ENCODE measurements at regions of chr11 and their contacts with region 1.

Region 1: DNA sequence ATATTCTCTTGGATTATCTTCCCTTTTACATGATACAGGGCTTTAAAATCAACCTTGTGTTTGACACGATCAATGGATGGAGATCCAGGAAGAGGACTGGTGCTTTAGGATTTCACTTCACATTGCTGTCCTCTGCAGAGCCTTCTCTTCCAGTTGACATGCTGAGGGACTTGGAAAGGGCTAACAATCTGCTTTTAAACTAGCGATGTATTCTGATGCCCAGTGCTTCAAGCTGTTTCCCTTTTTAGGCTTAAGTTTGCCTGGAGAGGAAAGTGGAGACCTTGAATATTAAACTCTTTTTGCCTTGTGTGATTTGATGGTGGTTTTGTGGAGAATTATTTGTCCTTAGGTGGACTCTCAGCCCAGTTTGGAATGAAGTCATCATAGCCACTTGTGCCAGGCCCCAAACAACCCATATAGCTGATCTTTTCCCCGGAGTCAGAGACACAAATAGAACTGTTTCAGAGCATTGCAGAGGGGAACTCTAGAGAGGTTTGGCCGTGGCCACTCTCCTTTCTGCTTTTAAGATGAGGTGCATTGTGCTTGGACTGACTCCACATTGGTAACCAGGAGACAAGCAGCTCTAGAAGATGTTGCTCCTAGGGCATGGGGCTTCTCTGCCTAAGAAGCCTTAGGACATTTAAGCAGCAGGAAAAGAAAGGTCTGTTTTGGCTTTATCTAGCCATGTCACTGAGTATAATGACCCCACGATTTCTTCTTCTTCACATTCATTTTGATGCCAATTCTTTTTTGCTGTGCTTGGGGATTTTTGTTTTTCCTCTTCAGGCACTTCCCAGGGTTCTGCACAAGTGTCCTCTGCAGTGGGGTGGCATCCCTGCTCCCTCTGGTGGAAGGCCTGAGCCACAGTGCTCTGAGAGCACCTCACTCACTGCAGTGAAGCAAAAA is 152.8 kb downstream of the NCAM1 start:
- DNase-seq: peak; percentile 61 to 97 (median 78)

Region 2: GRCh38 chr11:112588252-112588694 is 525.8 kb before region 1 on chr11:
- intact Hi-C with region 1: loop called (anchors 10 kb)
- DNase-seq: peak; percentile 42 to 94 (median 58)

Region 3: DNA sequence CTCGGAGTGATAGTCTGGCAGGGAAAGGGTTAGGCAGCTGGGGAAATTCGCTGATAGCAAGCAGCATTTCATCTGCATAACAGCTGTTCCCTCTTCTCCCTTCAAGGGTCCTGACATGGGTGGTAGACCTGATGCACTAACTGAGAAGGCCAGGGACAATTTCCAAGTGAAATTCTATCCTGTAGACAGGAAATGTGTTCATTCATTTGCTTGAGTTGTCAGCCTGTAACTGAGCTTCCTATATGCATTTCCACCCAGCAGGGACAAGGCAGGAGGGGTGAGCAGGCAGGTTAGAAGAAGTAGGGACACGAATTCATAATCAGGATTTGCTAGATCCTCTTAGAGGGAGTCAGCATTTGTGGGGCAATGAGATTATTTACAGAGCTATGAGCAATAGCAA is 307.2 kb before region 1 on chr11:
- intact Hi-C with region 1: loop called (anchors 10 kb)
- DNase-seq: no peak

Region 4: GRCh38 chr11:112837162-112837826 is 276.8 kb before region 1 on chr11:
- intact Hi-C with region 1: loop called (anchors 10 kb)
- DNase-seq: peak in 7 of 10 donors; percentile 45 to 93 (median 68)

Region 5: GRCh38 chr11:113023228-113023627 is 90.8 kb before region 1 on chr11:
- intact Hi-C with region 1: no loop called
- DNase-seq: no peak

Region 6: DNA sequence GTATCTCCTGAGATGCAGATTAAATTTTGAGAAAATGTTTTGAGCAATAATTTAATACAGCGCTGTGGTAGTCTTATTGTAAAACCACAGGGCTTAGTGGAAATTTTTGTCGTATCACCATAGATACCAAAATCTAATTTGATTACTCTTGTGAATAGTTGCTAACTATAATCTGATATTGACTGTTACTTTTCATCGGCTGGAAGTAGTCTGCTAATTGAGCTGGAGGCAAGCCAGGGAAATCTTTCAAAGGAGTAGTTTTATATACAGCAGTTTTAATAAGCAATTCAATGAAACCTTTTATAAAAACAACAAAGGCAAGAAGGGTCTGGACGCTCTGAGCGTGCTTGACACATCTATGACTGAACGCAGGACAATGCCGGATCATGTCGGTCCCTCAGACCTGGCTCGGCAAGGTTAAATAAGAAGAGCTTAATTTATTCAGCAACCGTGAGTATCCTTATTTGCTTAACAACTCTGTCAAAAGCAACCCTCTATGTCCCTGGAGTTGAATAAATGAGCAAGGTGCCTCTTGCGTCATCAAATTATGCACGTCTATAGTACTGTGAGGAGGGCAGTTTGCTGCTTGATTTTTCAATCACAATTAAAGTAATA is 31.6 kb before region 1 on chr11:
- intact Hi-C with region 1: no loop called
- DNase-seq: no peak

Measured in posterior cingulate gyrus (tissue), 11 donors.